ENCODE measurements at regions of chr15 and their contacts with region 1.

Region 1: GRCh38 chr15:74781431-74782258 is at the start of gene CSK:
- DNase-seq: peak; percentile 59 to 94 (median 80)
- ATAC-seq: peak; percentile 59
- H3K4me3 ChIP-seq: peak within 1 kb of the TSS; percentile 100
- H3K4me3 Mint-ChIP-seq: peak within 1 kb of the TSS; percentile 90
- H3K27ac ChIP-seq: peak within 1 kb of the TSS; percentile 84 to 93
- H3K27ac Mint-ChIP-seq: peak within 1 kb of the TSS; percentile 94
- H3K4me1 ChIP-seq: peaks cover 88% of the 10 kb centered on the region
- H3K4me1 Mint-ChIP-seq: peaks cover 65% of the 10 kb centered on the region
- H3K27me3 ChIP-seq: no peaks in the 10 kb centered on the region
- H3K27me3 Mint-ChIP-seq: no peaks in the 10 kb centered on the region
- CTCF ChIP-seq: peak; percentile 59
- total RNA-seq, gene CSK: 114 to 118 TPM

Region 2: DNA sequence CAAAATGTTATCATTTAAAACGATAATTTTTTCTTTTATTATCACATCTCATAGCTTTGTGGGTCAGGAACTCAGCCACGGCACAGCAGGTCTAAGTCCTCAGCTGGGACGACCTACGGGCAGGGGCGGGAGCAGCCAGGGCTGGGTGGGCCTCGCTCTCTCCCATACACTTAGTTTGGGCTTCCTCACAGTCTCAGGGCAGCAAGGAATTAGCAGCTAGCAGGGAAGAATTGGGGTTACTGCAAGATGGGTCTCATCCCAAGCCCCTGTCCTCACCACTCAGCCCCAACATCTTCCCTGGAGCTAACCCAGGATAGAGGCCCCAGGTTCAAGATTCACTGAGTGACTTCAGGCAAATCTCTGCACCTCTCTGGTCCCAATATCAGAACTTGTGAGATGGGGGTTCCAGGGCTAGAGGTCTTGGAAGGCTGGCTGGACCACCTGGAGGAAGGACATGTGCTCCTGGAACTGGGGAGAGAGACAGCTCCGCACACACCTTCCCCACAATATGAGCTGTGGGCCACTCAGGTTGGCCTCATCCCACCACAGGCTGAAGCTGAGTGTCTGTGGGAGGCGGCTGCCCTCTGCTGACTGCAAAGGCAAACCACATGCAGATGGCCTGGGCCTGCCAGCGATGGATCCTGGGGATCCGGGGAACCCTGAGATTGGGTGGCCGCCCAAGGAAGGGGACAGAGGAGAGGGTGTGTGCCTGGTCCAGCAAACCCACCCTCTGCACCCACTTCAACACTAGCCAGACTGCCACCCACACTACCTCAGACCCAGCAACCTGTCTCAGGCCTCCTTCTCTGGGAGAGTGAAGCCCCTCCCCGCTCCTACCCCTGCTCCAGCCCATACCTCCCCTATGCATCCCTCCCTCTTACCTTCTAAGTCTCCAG is 459.2 kb before region 1 on chr15:
- CTCF ChIA-PET with region 1: no interaction called
- POLR2A ChIA-PET with region 1: no interaction called
- intact Hi-C with region 1: no loop called
- DNase-seq: peak; percentile 33 to 73 (median 48)
- ATAC-seq: peak; percentile 81
- H3K4me3 ChIP-seq: no peak overlapping the region
- H3K4me3 Mint-ChIP-seq: no peak overlapping the region
- H3K27ac ChIP-seq: no peak overlapping the region
- H3K27ac Mint-ChIP-seq: no peak overlapping the region
- H3K4me1 ChIP-seq: peaks cover 4% of the 10 kb centered on the region
- H3K4me1 Mint-ChIP-seq: peaks cover 16% of the 10 kb centered on the region
- H3K27me3 ChIP-seq: no peaks in the 10 kb centered on the region
- H3K27me3 Mint-ChIP-seq: no peaks in the 10 kb centered on the region
- CTCF ChIP-seq: peak; percentile 64

Region 3: GRCh38 chr15:74460871-74461846 is 320.5 kb before region 1 on chr15 and contains the start of gene UBL7:
- CTCF ChIA-PET with region 1: no interaction called
- POLR2A ChIA-PET with region 1: no interaction called
- intact Hi-C with region 1: loop called in 1 of 2 experiments (anchors 10 kb)
- DNase-seq: peak; percentile 91 to 97 (median 96)
- ATAC-seq: peak; percentile 98
- H3K4me3 ChIP-seq: peak within 1 kb of the TSS; percentile 92
- H3K4me3 Mint-ChIP-seq: peak within 1 kb of the TSS; percentile 97
- H3K27ac ChIP-seq: peak within 1 kb of the TSS; percentile 61 to 62
- H3K27ac Mint-ChIP-seq: peak within 1 kb of the TSS; percentile 84
- H3K4me1 ChIP-seq: peaks cover 19% of the 10 kb centered on the region
- H3K4me1 Mint-ChIP-seq: peaks cover 53% of the 10 kb centered on the region
- H3K27me3 ChIP-seq: no peaks in the 10 kb centered on the region
- H3K27me3 Mint-ChIP-seq: no peaks in the 10 kb centered on the region
- CTCF ChIP-seq: peak; percentile 15
- total RNA-seq, gene UBL7: 14.3 to 17.1 TPM

Region 4: DNA sequence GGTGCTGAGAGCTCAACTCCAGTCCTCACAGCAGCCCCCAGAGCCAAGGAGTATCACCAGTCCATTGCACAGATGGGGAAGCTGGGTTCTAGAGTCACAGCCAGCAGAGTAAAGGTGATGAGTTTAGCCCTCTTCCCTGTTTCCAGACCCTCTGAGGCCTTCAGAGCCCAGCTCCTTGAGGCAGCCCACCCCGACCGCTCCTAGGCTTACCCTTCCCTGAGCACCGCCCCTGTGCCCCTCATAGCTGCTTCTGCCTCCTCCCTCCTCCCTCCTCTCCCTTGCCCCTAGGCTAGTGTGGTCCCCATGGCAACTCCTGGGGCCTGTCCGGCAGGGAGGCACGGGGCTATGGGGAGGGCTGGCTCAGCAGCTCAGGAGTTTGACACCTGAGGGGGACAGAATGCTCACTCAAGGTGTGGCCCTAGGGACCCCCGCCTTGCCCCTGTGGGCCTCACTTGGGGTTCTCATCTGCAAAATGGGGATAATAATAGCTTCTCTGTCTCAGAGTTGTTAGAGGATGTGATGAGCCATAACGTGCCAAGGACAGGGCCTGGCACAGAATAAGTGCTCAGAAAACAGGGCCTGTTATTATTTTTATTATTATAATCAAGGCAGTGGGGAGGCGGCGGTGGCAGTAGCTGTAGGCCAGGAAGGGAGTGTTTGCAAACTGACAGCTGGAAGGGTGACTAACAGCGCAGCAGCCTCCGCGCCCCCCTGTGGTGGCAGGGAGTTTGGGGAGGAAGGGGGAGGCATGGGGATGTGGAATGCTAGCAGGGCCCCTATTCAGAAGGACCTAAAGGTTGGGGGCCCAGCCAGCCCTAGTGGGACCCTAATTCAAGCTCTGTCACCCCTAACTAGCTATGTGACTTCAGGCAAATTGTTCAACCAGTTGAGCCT is 11.7 kb after region 1 on chr15:
- CTCF ChIA-PET with region 1: interaction called, 231 read pairs
- POLR2A ChIA-PET with region 1: interaction called, 925 read pairs
- intact Hi-C with region 1: loop called (anchors 1 kb)
- DNase-seq: peak; percentile 65 to 88 (median 78)
- ATAC-seq: peak; percentile 47
- H3K4me3 ChIP-seq: peak overlapping the region; percentile 6
- H3K4me3 Mint-ChIP-seq: peak overlapping the region; percentile 74
- H3K27ac ChIP-seq: peak overlapping the region; percentile 58 to 90
- H3K27ac Mint-ChIP-seq: peak overlapping the region; percentile 94
- H3K4me1 ChIP-seq: peaks cover 96% of the 10 kb centered on the region
- H3K4me1 Mint-ChIP-seq: peaks cover 90% of the 10 kb centered on the region
- H3K27me3 ChIP-seq: no peaks in the 10 kb centered on the region
- H3K27me3 Mint-ChIP-seq: no peaks in the 10 kb centered on the region
- CTCF ChIP-seq: peak; percentile 68